ENCODE measurements at regions of chr3 and their contacts with region 1.

Region 1: GRCh38 chr3:56997675-56998074 is 62.8 kb upstream of the SPATA12 start:
- DNase-seq: no peak
- H3K4me3 Mint-ChIP-seq: no peak overlapping the region
- H3K27ac Mint-ChIP-seq: no peak overlapping the region
- H3K4me1 Mint-ChIP-seq: no peaks in the 10 kb centered on the region
- H3K27me3 Mint-ChIP-seq: no peaks in the 10 kb centered on the region
- CTCF ChIP-seq: no peak

Region 2: GRCh38 chr3:57060089-57060829 is 62.6 kb after region 1 on chr3 and contains the start of gene SPATA12:
- CTCF ChIA-PET with region 1: interaction called, 12 read pairs
- POLR2A ChIA-PET with region 1: interaction called, 5 read pairs
- intact Hi-C with region 1: no loop called
- DNase-seq: peak; percentile 97
- H3K4me3 Mint-ChIP-seq: peak within 1 kb of the TSS; percentile 51
- H3K27ac Mint-ChIP-seq: peak within 1 kb of the TSS; percentile 73
- H3K4me1 Mint-ChIP-seq: peaks cover 30% of the 10 kb centered on the region
- H3K27me3 Mint-ChIP-seq: no peaks in the 10 kb centered on the region
- CTCF ChIP-seq: no peak
- total RNA-seq, gene SPATA12: 0.12 TPM in 1 of 2 replicates, not detected in the other

Region 3: GRCh38 chr3:57078344-57078634 is 80.6 kb after region 1 on chr3:
- CTCF ChIA-PET with region 1: interaction called, 14 read pairs
- POLR2A ChIA-PET with region 1: no interaction called
- intact Hi-C with region 1: loop called (anchors 2 kb)
- DNase-seq: no peak
- H3K4me3 Mint-ChIP-seq: peak overlapping the region; percentile 73
- H3K27ac Mint-ChIP-seq: no peak overlapping the region
- H3K4me1 Mint-ChIP-seq: peaks cover 5% of the 10 kb centered on the region
- H3K27me3 Mint-ChIP-seq: no peaks in the 10 kb centered on the region
- CTCF ChIP-seq: no peak

Region 4: GRCh38 chr3:57100046-57100695 is 102.5 kb after region 1 on chr3:
- CTCF ChIA-PET with region 1: interaction called, 45 read pairs
- POLR2A ChIA-PET with region 1: no interaction called
- intact Hi-C with region 1: loop called (anchors 1 kb)
- DNase-seq: peak; percentile 83
- H3K4me3 Mint-ChIP-seq: no peak overlapping the region
- H3K27ac Mint-ChIP-seq: no peak overlapping the region
- H3K4me1 Mint-ChIP-seq: no peaks in the 10 kb centered on the region
- H3K27me3 Mint-ChIP-seq: no peaks in the 10 kb centered on the region
- CTCF ChIP-seq: peak; percentile 82

Region 5: GRCh38 chr3:57227204-57227929 is 229.7 kb after region 1 on chr3 and contains the start of gene APPL1:
- CTCF ChIA-PET with region 1: interaction called, 33 read pairs
- POLR2A ChIA-PET with region 1: interaction called, 10 read pairs
- intact Hi-C with region 1: loop called (anchors 1 kb)
- DNase-seq: peak; percentile 90
- H3K4me3 Mint-ChIP-seq: peak within 1 kb of the TSS; percentile 84
- H3K27ac Mint-ChIP-seq: peak within 1 kb of the TSS; percentile 75
- H3K4me1 Mint-ChIP-seq: peaks cover 11% of the 10 kb centered on the region
- H3K27me3 Mint-ChIP-seq: no peaks in the 10 kb centered on the region
- CTCF ChIP-seq: peak; percentile 5
- total RNA-seq, gene APPL1: 26.4 and 35.4 TPM in 2 replicates

Measured in MCF 10A (cell line).